HepG2 (cell line): ENCODE measurements at regions of chr16 and their contacts with region 1.

Region 1: DNA sequence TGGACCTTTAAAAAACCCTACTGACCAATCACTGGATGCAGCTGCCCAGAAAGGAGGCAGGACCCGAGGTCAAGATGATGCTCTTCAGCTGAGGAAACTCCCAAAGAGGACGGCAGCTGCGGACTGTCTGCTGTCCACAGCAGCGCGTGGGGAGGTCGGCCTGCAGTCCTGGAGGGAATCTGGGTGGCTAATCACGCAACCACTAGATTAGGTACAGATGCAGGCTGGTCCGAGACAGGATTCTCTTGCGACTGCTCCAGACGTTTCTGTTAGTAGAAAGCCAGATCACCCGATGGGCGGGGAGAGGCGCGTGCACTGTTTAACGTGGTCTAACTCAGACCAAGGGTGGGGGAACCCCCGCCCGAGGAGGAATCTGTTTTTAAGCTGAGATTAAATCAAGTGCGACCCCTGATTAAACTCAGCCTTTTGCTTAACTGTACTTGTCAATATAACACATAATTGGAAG is 8.8 kb downstream of the CTRB2 start:
- DNase-seq: no peak
- ATAC-seq: peak; percentile 9; the same call in 1 of the 3 replicates
- H3K4me3 ChIP-seq: peak overlapping the region; percentile 5 to 64 (median 34); a peak in 4 of 6 replicates
- H3K27ac ChIP-seq: no peak overlapping the region
- H3K4me1 ChIP-seq: peaks cover 23% of the 10 kb centered on the region
- H3K27me3 ChIP-seq: peaks cover 11 to 51% of the 10 kb centered on the region in 2 experiments
- CTCF ChIP-seq: no peak
- EP300 ChIP-seq: no peak
- POLR2A ChIP-seq: no peak
- RAD21 ChIP-seq: no peak

Region 2: GRCh38 chr16:75238132-75238852 is 40.1 kb after region 1 on chr16:
- CTCF ChIA-PET with region 1: no interaction called
- POLR2A ChIA-PET with region 1: interaction called, 3 read pairs
- in situ Hi-C with region 1: no loop called
- intact Hi-C with region 1: loop called (anchors 5 kb)
- DNase-seq: peak; percentile 89
- ATAC-seq: peak; percentile 42
- H3K4me3 ChIP-seq: peak overlapping the region in 1 of 3 experiments; percentile 17; a peak in 1 of 6 replicates
- H3K27ac ChIP-seq: peak overlapping the region; percentile 77
- H3K4me1 ChIP-seq: peaks cover 59% of the 10 kb centered on the region
- H3K27me3 ChIP-seq: no peaks in the 10 kb centered on the region
- CTCF ChIP-seq: no peak
- EP300 ChIP-seq: peak in 1 of 2 experiments; percentile 65; a peak in 3 of 4 replicates
- POLR2A ChIP-seq: no peak
- RAD21 ChIP-seq: no peak

Region 3: DNA sequence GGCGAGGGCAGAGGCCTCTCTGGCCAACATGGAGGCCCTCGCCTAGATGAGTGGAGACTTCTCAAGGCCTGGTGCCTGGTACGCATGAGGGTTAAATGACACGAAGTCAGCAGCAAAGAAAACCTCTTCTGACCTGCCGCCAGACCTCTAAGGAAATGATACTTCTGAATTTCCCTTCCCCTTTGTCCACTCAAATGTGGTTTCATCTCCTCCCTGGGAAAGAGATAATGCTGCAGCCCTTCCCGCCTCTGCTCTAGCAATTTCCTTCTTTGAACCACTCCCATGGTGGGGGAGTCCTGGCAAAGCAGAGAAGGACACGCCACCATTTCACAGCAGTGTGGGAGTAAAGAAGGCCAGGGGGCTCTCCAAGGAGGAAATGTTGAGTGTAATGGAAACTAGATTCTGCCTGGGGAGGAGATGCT is 118.9 kb after region 1 on chr16:
- CTCF ChIA-PET with region 1: no interaction called
- POLR2A ChIA-PET with region 1: no interaction called
- in situ Hi-C with region 1: no loop called
- intact Hi-C with region 1: no loop called
- DNase-seq: no peak
- ATAC-seq: no peak
- H3K4me3 ChIP-seq: no peak overlapping the region
- H3K27ac ChIP-seq: no peak overlapping the region
- H3K4me1 ChIP-seq: 0 out of 2 replicates have a peak, but pooled peaks cover 5% of the 10 kb centered on the region
- H3K27me3 ChIP-seq: no peaks in the 10 kb centered on the region
- CTCF ChIP-seq: no peak
- EP300 ChIP-seq: no peak
- POLR2A ChIP-seq: no peak
- RAD21 ChIP-seq: no peak

Region 4: DNA sequence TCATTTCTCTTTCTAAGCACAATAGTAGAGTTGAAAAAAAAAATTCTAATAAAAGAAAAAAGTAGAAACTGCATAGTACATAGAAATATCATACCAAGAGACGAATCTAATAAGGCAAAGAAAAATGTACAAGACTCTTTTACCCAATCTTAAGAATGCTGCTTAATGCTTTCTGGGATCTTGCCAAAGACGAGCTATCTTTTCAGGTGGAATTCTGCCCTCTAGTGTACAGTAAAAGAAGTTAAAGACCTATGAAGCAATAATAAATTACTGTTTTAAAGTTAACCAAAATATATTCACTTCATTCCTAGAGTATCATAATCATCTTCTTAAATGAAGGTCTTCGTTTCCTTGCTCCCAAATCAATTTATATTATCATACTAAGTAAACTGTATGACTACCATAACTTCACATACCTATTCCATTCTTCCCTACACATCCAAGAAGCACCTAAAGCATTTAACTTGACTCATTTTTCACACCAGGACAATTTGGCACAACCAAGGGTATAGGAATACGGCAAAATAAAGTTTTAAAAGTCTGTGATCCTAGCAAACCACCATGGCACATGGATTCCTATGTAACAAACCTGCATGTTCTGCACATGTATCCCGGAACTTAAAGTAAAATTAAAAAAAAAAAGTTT is 187.5 kb after region 1 on chr16:
- CTCF ChIA-PET with region 1: interaction called, 36 read pairs
- POLR2A ChIA-PET with region 1: interaction called, 4 read pairs
- in situ Hi-C with region 1: loop called (anchors 5 kb)
- intact Hi-C with region 1: loop called (anchors 1 kb)
- DNase-seq: peak; percentile 68
- ATAC-seq: no peak
- H3K4me3 ChIP-seq: no peak overlapping the region
- H3K27ac ChIP-seq: no peak overlapping the region
- H3K4me1 ChIP-seq: no peaks in the 10 kb centered on the region
- H3K27me3 ChIP-seq: no peaks in the 10 kb centered on the region
- CTCF ChIP-seq: peak; percentile 74
- EP300 ChIP-seq: no peak
- POLR2A ChIP-seq: no peak
- RAD21 ChIP-seq: peak; percentile 69; the same call in 1 of the 2 replicates

Region 5: GRCh38 chr16:75402821-75403475 is 204.8 kb after region 1 on chr16:
- CTCF ChIA-PET with region 1: interaction called, 21 read pairs
- POLR2A ChIA-PET with region 1: interaction called, 3 read pairs
- in situ Hi-C with region 1: no loop called
- intact Hi-C with region 1: loop called (anchors 1 kb)
- DNase-seq: peak; percentile 36
- ATAC-seq: peak; percentile 46; the same call in 2 of the 3 replicates
- H3K4me3 ChIP-seq: no peak overlapping the region
- H3K27ac ChIP-seq: no peak overlapping the region
- H3K4me1 ChIP-seq: peaks cover 13% of the 10 kb centered on the region
- H3K27me3 ChIP-seq: no peaks in the 10 kb centered on the region
- CTCF ChIP-seq: peak; percentile 60
- EP300 ChIP-seq: no peak
- POLR2A ChIP-seq: no peak
- RAD21 ChIP-seq: no peak; the same call in 1 of the 2 replicates

Region 6: DNA sequence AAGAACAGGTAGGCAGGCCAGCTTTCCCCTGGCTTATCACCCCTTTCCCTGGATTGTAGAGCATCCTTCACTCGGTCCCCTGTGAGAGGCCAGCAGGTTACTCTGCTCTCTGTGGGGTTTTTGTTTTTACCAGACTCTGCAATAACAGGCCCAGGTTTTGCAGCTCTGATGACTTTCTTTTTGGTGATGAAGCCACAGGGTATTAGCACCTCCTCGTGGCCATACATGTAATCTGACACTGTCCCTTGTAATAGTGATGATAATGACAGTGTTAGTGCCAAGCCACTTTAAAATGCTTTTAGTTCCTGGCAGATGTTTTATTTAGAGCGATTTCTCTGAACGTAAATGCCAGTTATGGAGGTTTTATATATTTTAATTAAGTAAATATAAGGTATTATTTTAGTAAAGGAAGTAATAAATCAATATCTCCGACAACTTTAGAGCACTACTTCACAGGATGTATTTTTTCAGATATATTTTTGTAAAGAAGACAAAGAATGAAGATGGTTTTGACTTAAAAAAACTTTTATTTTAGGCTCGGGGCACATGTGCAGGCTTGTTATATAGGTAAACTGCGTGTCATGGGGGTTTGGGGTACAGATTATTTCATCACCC is 566.1 kb after region 1 on chr16:
- CTCF ChIA-PET with region 1: interaction called, 4 read pairs
- POLR2A ChIA-PET with region 1: no interaction called
- in situ Hi-C with region 1: loop called (anchors 25 kb)
- intact Hi-C with region 1: loop called (anchors 1 kb)
- DNase-seq: peak; percentile 69
- ATAC-seq: peak; percentile 98
- H3K4me3 ChIP-seq: no peak overlapping the region
- H3K27ac ChIP-seq: no peak overlapping the region
- H3K4me1 ChIP-seq: no peaks in the 10 kb centered on the region
- H3K27me3 ChIP-seq: no peaks in the 10 kb centered on the region
- CTCF ChIP-seq: peak; percentile 91
- EP300 ChIP-seq: no peak
- POLR2A ChIP-seq: no peak
- RAD21 ChIP-seq: peak; percentile 86